CD4-positive, alpha-beta T cell (primary cell): ENCODE measurements at regions of chr4 and their contacts with region 1.

Region 1: GRCh38 chr4:40301603-40302002 is 33.5 kb upstream of the CHRNA9 start:
- DNase-seq: peak; percentile 64 to 93 (median 77)
- ATAC-seq: peak; percentile 87
- H3K4me3 ChIP-seq: no peak overlapping the region
- H3K4me3 Mint-ChIP-seq: peak overlapping the region; percentile 75
- H3K27ac ChIP-seq: peak overlapping the region; percentile 60 to 82
- H3K27ac Mint-ChIP-seq: peak overlapping the region; percentile 91
- H3K4me1 ChIP-seq: peaks cover 93% of the 10 kb centered on the region
- H3K4me1 Mint-ChIP-seq: peaks cover 83% of the 10 kb centered on the region
- H3K27me3 ChIP-seq: no peaks in the 10 kb centered on the region
- H3K27me3 Mint-ChIP-seq: no peaks in the 10 kb centered on the region
- CTCF ChIP-seq: no peak

Region 2: DNA sequence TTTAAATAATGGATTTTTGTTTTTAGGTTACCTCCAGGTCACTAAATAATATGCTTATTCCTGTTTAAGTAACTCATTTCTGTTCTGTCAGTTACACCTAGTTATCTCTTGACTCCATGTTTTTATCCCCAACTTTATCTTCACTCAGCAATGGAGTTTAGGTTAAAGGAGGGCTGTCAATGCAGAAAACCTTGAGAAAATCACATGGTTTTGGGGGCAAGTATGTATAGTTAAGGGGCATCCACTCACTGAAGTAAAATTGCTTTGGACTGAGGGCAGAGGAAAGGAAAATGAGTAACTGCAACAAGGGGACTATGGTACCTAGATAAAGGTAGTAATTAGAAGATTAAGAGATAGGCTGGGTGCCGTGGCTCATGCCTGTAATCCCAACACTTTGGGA is 516.5 kb before region 1 on chr4:
- CTCF ChIA-PET with region 1: no interaction called
- POLR2A ChIA-PET with region 1: no interaction called
- intact Hi-C with region 1: no loop called
- DNase-seq: no peak
- ATAC-seq: no peak
- H3K4me3 ChIP-seq: no peak overlapping the region
- H3K4me3 Mint-ChIP-seq: no peak overlapping the region
- H3K27ac ChIP-seq: no peak overlapping the region
- H3K27ac Mint-ChIP-seq: no peak overlapping the region
- H3K4me1 ChIP-seq: no peaks in the 10 kb centered on the region
- H3K4me1 Mint-ChIP-seq: no peaks in the 10 kb centered on the region
- H3K27me3 ChIP-seq: no peaks in the 10 kb centered on the region
- H3K27me3 Mint-ChIP-seq: no peaks in the 10 kb centered on the region
- CTCF ChIP-seq: no peak

Region 3: DNA sequence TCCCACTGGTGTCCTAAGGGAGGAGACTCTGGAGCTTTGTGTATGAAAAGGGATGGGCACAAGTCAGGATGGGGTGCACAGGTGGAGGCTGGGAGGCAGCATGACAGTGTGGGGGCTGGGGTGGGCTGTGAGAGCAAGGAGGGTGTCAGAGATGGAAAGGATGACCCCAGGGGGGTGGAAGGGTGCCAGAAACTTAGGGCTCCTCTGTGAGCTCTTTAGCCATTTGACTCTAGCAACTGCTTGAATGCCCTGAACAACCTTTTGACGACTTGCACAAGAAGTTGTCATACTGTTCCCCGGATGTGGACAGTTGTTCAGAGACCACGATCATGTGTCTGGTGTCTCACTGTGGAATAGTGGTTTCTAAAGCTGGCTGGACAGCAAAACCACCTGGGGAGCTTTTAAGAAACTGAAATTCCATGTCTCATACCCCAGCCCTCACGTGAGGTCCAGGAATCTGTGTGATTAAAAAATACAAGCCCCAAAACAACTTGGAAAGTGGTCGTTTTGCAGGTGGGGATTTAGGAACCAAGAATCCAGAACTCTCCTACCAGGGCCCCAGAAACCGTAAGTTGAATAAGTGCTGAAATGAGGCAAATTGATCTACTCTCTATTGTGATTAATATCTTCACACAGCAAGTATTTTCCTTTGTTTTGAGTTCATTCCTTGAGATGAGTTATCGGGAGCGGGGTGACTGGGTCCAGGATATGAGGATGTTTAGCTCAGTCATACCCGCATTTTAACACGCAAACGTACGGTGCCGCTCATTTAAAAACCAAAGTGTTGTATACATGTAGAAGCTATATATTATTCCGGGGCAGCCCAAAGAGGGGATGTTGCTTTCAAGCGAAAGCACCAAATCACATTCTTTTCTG is 101.4 kb before region 1 on chr4:
- CTCF ChIA-PET with region 1: no interaction called
- POLR2A ChIA-PET with region 1: interaction called, 98 read pairs
- intact Hi-C with region 1: loop called (anchors 2 to 5 kb)
- DNase-seq: peak in 10 of 14 experiments; percentile 31 to 90 (median 50)
- ATAC-seq: peak; percentile 18
- H3K4me3 ChIP-seq: peak overlapping the region; percentile 74
- H3K4me3 Mint-ChIP-seq: peak overlapping the region; percentile 100
- H3K27ac ChIP-seq: peak overlapping the region; percentile 93 to 99
- H3K27ac Mint-ChIP-seq: peak overlapping the region; percentile 99
- H3K4me1 ChIP-seq: peaks cover 33% of the 10 kb centered on the region
- H3K4me1 Mint-ChIP-seq: peaks cover 46% of the 10 kb centered on the region
- H3K27me3 ChIP-seq: no peaks in the 10 kb centered on the region
- H3K27me3 Mint-ChIP-seq: no peaks in the 10 kb centered on the region
- CTCF ChIP-seq: no peak

Region 4: GRCh38 chr4:40228497-40229365 is 72.9 kb before region 1 on chr4:
- CTCF ChIA-PET with region 1: interaction called, 4 read pairs
- POLR2A ChIA-PET with region 1: interaction called, 72 read pairs
- intact Hi-C with region 1: no loop called
- DNase-seq: peak in 1 of 14 experiments; percentile 52
- ATAC-seq: no peak
- H3K4me3 ChIP-seq: peak overlapping the region; percentile 8
- H3K4me3 Mint-ChIP-seq: peak overlapping the region; percentile 49
- H3K27ac ChIP-seq: peak overlapping the region; percentile 70 to 82
- H3K27ac Mint-ChIP-seq: peak overlapping the region; percentile 93
- H3K4me1 ChIP-seq: peaks cover 86% of the 10 kb centered on the region
- H3K4me1 Mint-ChIP-seq: peaks cover 91% of the 10 kb centered on the region
- H3K27me3 ChIP-seq: no peaks in the 10 kb centered on the region
- H3K27me3 Mint-ChIP-seq: no peaks in the 10 kb centered on the region
- CTCF ChIP-seq: peak; percentile 37

Region 5: DNA sequence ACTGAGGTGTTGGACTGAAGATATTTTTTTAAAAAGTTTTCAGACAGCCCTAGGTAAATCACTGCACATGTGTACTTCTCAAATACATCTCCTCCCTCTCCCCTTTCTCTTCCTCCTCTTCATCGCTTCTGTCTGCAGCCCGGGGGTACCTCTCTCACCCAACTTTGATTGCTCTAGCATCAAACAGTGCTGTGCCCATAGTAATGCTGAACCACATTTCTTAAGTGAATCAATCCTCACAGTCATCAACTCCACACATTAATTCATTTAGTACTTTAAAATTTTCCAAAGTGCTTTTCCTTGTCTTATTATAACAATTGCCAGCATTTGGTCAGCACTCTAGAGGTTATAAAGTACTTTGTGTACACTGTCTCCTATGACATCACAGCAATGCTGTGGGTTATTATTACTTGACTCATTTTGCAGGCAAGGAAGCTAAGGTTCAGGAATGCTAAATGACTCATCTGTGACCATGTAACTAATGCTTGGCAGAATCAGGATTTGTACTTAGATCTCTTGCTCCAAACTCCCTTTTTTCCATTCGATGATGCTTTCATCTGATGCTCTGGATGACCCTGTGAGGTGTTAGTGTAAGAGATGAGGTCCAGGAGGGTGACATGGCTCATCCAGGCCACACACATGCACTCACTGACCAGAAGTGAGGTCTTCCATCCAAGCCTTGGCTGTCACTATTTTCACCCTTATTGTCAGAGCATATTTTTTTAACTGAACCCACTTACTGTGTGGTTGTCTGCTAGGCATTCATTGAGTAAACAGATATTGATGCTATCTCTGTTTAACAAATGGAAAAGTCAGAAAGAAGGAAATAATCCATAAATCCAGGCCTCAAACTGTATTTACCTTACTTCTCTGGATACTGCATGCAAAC is 46.0 kb before region 1 on chr4:
- CTCF ChIA-PET with region 1: no interaction called
- POLR2A ChIA-PET with region 1: interaction called, 41 read pairs
- intact Hi-C with region 1: no loop called
- DNase-seq: no peak
- ATAC-seq: peak; percentile 43
- H3K4me3 ChIP-seq: no peak overlapping the region
- H3K4me3 Mint-ChIP-seq: peak overlapping the region; percentile 40
- H3K27ac ChIP-seq: peak overlapping the region in 1 of 2 donors; percentile 35
- H3K27ac Mint-ChIP-seq: peak overlapping the region; percentile 85
- H3K4me1 ChIP-seq: peaks cover 59% of the 10 kb centered on the region
- H3K4me1 Mint-ChIP-seq: peaks cover 79% of the 10 kb centered on the region
- H3K27me3 ChIP-seq: no peaks in the 10 kb centered on the region
- H3K27me3 Mint-ChIP-seq: no peaks in the 10 kb centered on the region
- CTCF ChIP-seq: no peak

Region 6: GRCh38 chr4:40283968-40284367 is 17.6 kb before region 1 on chr4:
- CTCF ChIA-PET with region 1: interaction called, 72 read pairs
- POLR2A ChIA-PET with region 1: interaction called, 30 read pairs
- intact Hi-C with region 1: loop called (anchors 1 to 2 kb)
- DNase-seq: peak; percentile 58 to 93 (median 78)
- ATAC-seq: peak; percentile 97
- H3K4me3 ChIP-seq: no peak overlapping the region
- H3K4me3 Mint-ChIP-seq: peak overlapping the region; percentile 82
- H3K27ac ChIP-seq: peak overlapping the region; percentile 33 to 60
- H3K27ac Mint-ChIP-seq: peak overlapping the region; percentile 85
- H3K4me1 ChIP-seq: peaks cover 47% of the 10 kb centered on the region
- H3K4me1 Mint-ChIP-seq: peaks cover 76% of the 10 kb centered on the region
- H3K27me3 ChIP-seq: no peaks in the 10 kb centered on the region
- H3K27me3 Mint-ChIP-seq: no peaks in the 10 kb centered on the region
- CTCF ChIP-seq: peak; percentile 49

Region 7: DNA sequence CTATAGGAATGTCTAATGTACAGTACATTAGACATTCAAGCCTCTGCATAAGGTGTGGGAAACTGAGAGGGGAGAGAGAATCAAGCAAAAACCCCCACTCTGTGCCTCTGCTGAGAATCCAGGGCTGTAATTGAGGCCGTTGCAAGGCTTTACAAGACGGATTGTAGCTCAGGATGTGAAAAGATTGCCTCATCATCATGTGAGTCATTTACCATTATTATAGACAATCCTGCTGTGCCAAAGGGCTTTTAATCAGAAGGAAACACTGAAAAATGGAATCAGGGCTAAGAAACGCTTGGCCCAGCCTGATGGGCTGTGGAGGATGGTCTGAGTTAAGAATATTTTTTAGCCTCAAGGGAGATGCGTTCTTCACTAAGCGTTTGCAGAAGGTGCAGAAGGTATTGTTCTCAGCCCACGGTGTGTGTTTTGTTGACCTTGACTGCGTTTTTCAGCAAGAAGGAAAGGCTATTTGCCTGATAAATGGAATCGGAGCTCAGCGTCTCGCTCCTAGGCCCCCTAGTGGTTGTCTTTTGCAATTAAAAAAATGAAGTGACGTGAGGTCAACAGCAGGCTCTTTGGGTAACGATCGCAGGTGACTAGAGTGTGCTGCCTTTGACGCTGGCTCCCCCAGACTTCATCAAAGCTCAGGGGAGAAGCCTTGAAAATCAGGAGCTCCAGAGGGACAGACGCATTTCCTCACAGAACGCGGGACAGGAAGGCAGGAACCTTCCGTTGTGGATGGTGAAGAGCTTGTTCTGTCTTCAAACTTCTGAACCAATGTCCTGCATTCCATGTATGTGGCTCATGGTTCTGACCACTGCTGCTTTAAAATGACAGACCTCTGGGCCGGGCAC is 15.4 kb after region 1 on chr4:
- CTCF ChIA-PET with region 1: interaction called, 24 read pairs
- POLR2A ChIA-PET with region 1: interaction called, 20 read pairs
- intact Hi-C with region 1: loop called in 1 of 2 experiments (anchors 2 kb)
- DNase-seq: peak in 13 of 14 experiments; percentile 34 to 88 (median 54)
- ATAC-seq: peak; percentile 67
- H3K4me3 ChIP-seq: peak overlapping the region; percentile 54
- H3K4me3 Mint-ChIP-seq: peak overlapping the region; percentile 83
- H3K27ac ChIP-seq: peak overlapping the region; percentile 69 to 80
- H3K27ac Mint-ChIP-seq: peak overlapping the region; percentile 91
- H3K4me1 ChIP-seq: peaks cover 20% of the 10 kb centered on the region
- H3K4me1 Mint-ChIP-seq: peaks cover 57% of the 10 kb centered on the region
- H3K27me3 ChIP-seq: no peaks in the 10 kb centered on the region
- H3K27me3 Mint-ChIP-seq: no peaks in the 10 kb centered on the region
- CTCF ChIP-seq: peak; percentile 86